Activated CD8-positive, alpha-beta memory T cell treated with anti-CD3 and anti-CD28 coated beads, Interleukin-2, amount 10 ng/mL, durations not matched to agents 7 days and 5 days (primary cell): ENCODE measurements at regions of chr12 and their contacts with region 1.

Region 1: GRCh38 chr12:103947871-103948555 is 17.7 kb upstream of the TDG start:
- DNase-seq: no peak
- ATAC-seq: no peak
- H3K4me3 Mint-ChIP-seq: no peak overlapping the region
- H3K27ac Mint-ChIP-seq: peak overlapping the region; percentile 58
- H3K4me1 Mint-ChIP-seq: peaks cover 48% of the 10 kb centered on the region
- H3K27me3 Mint-ChIP-seq: no peaks in the 10 kb centered on the region

Region 2: GRCh38 chr12:103936679-103937078 is 11.3 kb before region 1 on chr12:
- CTCF ChIA-PET with region 1: interaction called, 12 read pairs
- DNase-seq: no peak
- ATAC-seq: no peak
- H3K4me3 Mint-ChIP-seq: no peak overlapping the region
- H3K27ac Mint-ChIP-seq: no peak overlapping the region
- H3K4me1 Mint-ChIP-seq: peaks cover 62% of the 10 kb centered on the region
- H3K27me3 Mint-ChIP-seq: no peaks in the 10 kb centered on the region